OCI-LY7 (cell line): ENCODE measurements at regions of chr13 and their contacts with region 1.

Region 1: DNA sequence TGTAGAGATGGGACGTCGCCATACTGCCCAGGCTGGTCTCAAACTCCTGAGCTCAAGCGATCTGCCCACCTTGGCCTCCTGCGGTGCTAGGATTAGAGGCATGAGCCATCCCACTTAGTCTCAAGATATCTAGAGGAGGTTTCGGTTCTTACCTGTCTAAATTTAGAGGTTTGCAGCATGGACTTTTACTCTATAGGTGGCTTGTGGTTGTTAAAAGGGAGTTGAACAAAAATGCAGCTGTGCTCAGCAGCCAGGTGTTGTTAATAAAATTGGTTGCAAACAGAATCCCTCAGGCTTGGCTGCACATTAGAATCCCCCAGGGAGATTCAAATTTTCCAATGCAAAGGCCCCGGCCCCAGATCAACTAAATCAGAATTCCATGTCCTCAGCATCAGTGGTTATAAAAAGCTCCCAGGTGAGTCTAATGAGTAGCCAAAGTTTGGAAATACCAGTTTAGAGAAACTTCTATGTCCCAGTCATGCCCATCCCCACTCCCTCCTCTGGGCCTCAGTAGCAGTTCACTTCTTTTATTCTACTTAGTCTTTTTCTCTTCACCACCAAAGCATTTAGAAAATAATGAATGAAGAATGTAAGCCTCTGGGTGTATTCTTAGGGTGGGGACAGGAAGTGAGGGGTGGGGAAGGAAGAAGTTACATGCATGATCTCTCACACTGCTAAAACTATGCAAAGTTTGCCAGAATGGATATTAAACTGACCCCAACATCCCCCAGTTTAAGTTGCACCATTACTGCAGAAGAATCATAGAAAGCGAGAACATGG is 471.0 kb downstream of the COG6 start:
- DNase-seq: peak; percentile 97
- H3K4me3 ChIP-seq: peak overlapping the region; percentile 47
- H3K27ac ChIP-seq: peak overlapping the region; percentile 96
- H3K4me1 ChIP-seq: peaks cover 76% of the 10 kb centered on the region
- CTCF ChIP-seq: no peak

Region 2: GRCh38 chr13:39942552-39943273 is 183.8 kb before region 1 on chr13:
- CTCF ChIA-PET with region 1: no interaction called
- POLR2A ChIA-PET with region 1: no interaction called
- intact Hi-C with region 1: loop called (anchors 5 kb)
- DNase-seq: peak; percentile 86
- H3K4me3 ChIP-seq: no peak overlapping the region
- H3K27ac ChIP-seq: no peak overlapping the region
- H3K4me1 ChIP-seq: peaks cover 4% of the 10 kb centered on the region
- CTCF ChIP-seq: peak; percentile 100

Region 3: DNA sequence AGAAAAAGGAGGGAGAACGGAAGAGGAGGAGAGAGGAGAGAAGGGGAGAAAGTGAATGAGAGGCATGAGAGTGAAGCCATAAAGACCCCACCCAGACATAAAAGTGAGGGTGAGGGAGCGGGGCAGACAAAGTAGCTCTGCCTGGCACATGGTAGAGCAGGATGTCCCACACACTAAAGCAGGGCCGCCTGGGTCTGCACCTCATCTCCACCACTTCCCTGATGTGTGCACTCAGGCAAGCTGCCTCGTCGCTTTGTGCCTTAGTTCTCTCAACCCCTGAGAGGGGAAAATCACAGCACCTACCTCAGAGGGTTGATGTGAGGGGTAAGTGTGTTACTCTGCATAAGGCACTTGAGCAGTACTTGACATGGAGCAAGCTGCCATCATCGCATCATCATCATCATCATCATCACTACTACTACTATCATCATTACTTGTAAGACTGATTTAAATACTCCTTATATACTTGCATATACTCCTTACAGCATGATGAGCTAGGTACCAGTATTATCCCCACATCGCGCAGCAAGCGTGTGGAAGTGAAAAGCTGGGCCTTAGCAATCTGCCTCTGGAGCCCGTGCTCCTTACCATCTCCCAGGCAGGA is 17.2 kb after region 1 on chr13:
- CTCF ChIA-PET with region 1: interaction called, 3 read pairs
- POLR2A ChIA-PET with region 1: interaction called, 10 read pairs
- intact Hi-C with region 1: no loop called
- DNase-seq: peak; percentile 55
- H3K4me3 ChIP-seq: no peak overlapping the region
- H3K27ac ChIP-seq: no peak overlapping the region
- H3K4me1 ChIP-seq: peaks cover 35% of the 10 kb centered on the region
- CTCF ChIP-seq: no peak

Region 4: GRCh38 chr13:40433577-40433976 is 307.1 kb after region 1 on chr13:
- CTCF ChIA-PET with region 1: no interaction called
- POLR2A ChIA-PET with region 1: interaction called, 5 read pairs
- intact Hi-C with region 1: loop called (anchors 5 kb)
- DNase-seq: peak; percentile 86
- H3K4me3 ChIP-seq: no peak overlapping the region
- H3K27ac ChIP-seq: peak overlapping the region; percentile 98
- H3K4me1 ChIP-seq: peaks cover 91% of the 10 kb centered on the region
- CTCF ChIP-seq: no peak

Region 5: GRCh38 chr13:40580566-40581276 is 454.2 kb after region 1 on chr13:
- CTCF ChIA-PET with region 1: no interaction called
- POLR2A ChIA-PET with region 1: no interaction called
- intact Hi-C with region 1: loop called (anchors 2 kb)
- DNase-seq: peak; percentile 80
- H3K4me3 ChIP-seq: peak overlapping the region; percentile 55
- H3K27ac ChIP-seq: peak overlapping the region; percentile 99
- H3K4me1 ChIP-seq: peaks cover 99% of the 10 kb centered on the region
- CTCF ChIP-seq: no peak

Region 6: GRCh38 chr13:40682449-40683240 is 556.1 kb after region 1 on chr13:
- CTCF ChIA-PET with region 1: no interaction called
- POLR2A ChIA-PET with region 1: interaction called, 3 read pairs
- intact Hi-C with region 1: loop called (anchors 5 kb)
- DNase-seq: peak; percentile 86
- H3K4me3 ChIP-seq: peak overlapping the region; percentile 11
- H3K27ac ChIP-seq: peak overlapping the region; percentile 41
- H3K4me1 ChIP-seq: peaks cover 39% of the 10 kb centered on the region
- CTCF ChIP-seq: peak; percentile 88